Stomach (tissue), 19 donors: ENCODE measurements at regions of chr15 and their contacts with region 1.

Region 1: GRCh38 chr15:30073915-30074314 is 8.8 kb upstream of the GOLGA8J start:
- DNase-seq: no peak
- H3K4me3 ChIP-seq: no peak overlapping the region
- H3K27ac ChIP-seq: no peak overlapping the region
- H3K4me1 ChIP-seq: peaks cover 0 to 4% (median 0%) of the 10 kb centered on the region in 4 donors
- H3K27me3 ChIP-seq: peaks cover 0 to 10% (median 0%) of the 10 kb centered on the region in 3 donors
- CTCF ChIP-seq: no peak
- EP300 ChIP-seq: no peak
- POLR2A ChIP-seq: no peak

Region 2: DNA sequence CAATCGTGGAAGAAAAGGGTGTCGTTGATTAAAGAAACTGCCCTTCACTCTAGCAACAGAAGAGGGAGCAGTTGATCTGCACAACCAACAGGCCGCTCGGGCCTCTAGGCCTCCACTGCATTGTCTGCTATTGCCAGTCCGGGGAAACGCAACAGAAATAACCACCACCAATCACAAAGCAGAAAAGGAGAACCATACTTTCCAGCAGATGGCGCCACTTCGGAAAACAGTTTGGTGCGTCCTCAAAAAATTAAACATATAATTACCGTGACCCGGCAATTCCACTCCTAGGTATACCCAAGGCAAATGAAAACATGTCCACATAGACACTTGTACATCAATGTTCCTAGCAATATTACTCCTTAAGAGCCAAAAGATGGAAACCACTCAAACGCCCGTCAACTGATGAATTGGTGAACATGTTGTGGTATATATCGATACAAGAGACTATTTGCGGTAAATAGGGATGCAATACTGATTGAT is 405.8 kb before region 1 on chr15:
- intact Hi-C with region 1: loop called (anchors 5 kb)
- DNase-seq: peak; percentile 85 to 90
- H3K4me3 ChIP-seq: no peak overlapping the region
- H3K27ac ChIP-seq: no peak overlapping the region
- H3K4me1 ChIP-seq: peaks cover 6 to 19% (median 15%) of the 10 kb centered on the region in 4 donors
- H3K27me3 ChIP-seq: no peaks in the 10 kb centered on the region
- CTCF ChIP-seq: peak in 6 of 7 experiments; percentile 38 to 96 (median 72)
- EP300 ChIP-seq: no peak
- POLR2A ChIP-seq: no peak